Aorta (tissue), 5 donors: ENCODE measurements at regions of chr21 and their contacts with region 1.

Region 1: GRCh38 chr21:32658524-32658923 is 46.3 kb upstream of the CFAP298 start:
- DNase-seq: no peak
- ATAC-seq: no peak
- H3K4me3 ChIP-seq: no peak overlapping the region
- H3K27ac ChIP-seq: no peak overlapping the region
- H3K4me1 ChIP-seq: no peaks in the 10 kb centered on the region
- H3K27me3 ChIP-seq: no peaks in the 10 kb centered on the region

Region 2: DNA sequence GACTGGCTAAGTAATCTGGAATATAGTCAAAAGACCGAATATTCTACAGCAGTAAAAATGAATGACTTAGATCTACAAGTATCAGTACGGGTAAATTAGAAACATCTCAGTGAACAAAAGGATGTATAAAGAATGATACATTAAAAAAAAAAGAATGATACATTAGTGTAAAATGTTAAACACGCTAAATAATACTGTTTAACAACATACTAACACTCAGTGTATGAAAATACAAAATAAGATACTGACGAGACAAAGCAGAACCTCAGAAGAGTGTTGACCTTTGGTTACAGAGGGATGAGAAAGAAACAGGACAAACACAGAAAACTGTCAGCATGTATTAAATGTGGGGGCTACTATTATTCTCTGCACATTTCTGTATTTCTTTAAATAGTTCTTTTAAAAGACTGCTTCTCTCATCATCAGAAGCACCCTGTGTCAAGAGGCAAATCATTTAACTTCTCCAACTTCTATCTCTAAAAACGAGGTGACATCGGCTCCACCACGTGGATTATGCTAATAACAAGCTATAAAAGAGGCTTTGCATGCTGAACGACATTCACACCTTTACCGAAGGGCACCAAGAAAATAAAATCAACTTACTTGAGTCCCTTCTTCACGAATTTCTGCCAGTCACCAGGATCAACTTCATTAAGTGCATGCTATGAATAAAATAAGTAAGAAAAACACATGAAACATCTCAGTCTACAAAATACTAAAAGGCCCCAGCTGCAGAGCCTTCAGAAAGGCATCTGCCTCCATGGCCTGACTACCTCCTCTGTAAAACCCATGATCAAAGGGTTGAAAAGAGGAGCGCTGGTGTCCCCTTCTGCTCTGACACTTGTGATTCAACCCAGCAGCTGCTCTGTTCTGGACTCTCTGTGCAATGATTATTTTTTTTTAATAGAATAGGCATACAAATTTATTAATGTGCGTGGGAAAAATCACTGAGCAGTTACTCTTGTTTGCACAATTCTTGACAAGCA is 317.4 kb before region 1 on chr21:
- intact Hi-C with region 1: no loop called
- DNase-seq: no peak
- ATAC-seq: no peak
- H3K4me3 ChIP-seq: no peak overlapping the region
- H3K27ac ChIP-seq: no peak overlapping the region
- H3K4me1 ChIP-seq: no peaks in the 10 kb centered on the region
- H3K27me3 ChIP-seq: no peaks in the 10 kb centered on the region

Region 3: DNA sequence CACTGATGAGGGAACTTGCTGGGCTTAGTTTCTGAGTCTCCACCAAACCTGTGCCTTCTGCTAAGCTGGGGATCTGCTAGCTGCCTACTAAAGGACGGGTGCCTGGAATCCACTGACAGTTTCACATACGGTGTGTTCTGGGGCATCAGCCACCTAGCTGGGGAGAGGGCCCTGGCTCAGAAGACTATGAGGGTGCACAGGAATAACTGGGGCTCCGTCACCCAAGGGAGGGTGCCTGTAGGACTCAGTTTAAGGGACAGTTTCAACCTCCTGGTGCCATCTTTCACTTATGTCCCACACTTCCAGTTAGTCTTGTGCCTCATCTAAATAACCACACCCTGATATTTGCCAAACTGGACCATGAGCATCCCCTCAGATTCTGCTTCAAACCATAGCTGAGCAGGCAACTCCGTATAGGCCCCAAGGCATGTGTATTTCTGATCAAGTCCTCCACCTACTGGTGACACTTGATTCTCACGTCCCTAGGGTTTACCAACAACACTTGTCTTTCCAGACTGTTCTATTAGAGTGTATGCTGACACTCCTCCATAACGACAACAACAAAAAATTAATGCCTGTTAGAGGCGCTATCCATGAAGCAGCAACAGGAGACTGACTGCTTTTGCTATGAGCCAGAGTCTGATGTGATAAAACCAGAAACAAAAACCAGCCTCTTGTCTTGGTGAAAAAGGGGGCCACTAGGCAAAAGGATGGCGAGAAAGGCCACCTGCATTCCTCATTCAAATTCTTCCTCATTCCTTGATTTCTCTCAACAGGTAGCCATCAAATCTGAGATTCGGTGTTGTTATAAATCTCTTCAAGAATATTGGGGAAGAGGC is 168.0 kb after region 1 on chr21:
- intact Hi-C with region 1: loop called in 1 of 2 experiments (anchors 5 kb)
- DNase-seq: no peak
- ATAC-seq: no peak
- H3K4me3 ChIP-seq: no peak overlapping the region
- H3K27ac ChIP-seq: no peak overlapping the region
- H3K4me1 ChIP-seq: no peaks in the 10 kb centered on the region
- H3K27me3 ChIP-seq: no peaks in the 10 kb centered on the region